HepG2 (cell line): ENCODE measurements at regions of chr9 and their contacts with region 1.

Region 1: DNA sequence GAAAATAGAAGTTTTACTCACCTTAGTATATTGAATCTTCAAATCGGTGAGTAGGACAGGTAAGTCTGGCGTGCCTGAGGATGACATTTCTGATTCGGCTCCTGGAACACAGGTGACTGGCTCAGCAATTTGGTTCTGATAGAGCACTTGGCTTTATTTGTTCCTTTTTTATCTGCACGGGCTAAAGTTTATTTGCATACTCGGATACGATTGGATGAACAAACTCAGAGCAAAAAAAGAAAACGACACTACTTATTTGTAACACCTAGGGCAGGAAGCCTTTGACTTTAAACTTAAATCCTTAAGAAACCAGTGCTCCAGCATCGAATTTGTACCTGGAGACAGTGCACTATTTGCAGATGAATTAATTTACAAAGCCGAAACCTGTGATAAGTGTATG is at the start of gene ALDH1A1:
- DNase-seq: peak; percentile 68
- ATAC-seq: peak; percentile 75
- H3K4me3 ChIP-seq: peak within 1 kb of the TSS; percentile 63 to 86 (median 64)
- H3K27ac ChIP-seq: peak within 1 kb of the TSS; percentile 75
- H3K4me1 ChIP-seq: peaks cover 40% of the 10 kb centered on the region
- H3K27me3 ChIP-seq: no peaks in the 10 kb centered on the region
- CTCF ChIP-seq: no peak
- EP300 ChIP-seq: no peak
- POLR2A ChIP-seq: peak; percentile 74 to 86
- RAD21 ChIP-seq: no peak
- total RNA-seq, gene ALDH1A1: 439 and 686 TPM in 2 replicates

Region 2: DNA sequence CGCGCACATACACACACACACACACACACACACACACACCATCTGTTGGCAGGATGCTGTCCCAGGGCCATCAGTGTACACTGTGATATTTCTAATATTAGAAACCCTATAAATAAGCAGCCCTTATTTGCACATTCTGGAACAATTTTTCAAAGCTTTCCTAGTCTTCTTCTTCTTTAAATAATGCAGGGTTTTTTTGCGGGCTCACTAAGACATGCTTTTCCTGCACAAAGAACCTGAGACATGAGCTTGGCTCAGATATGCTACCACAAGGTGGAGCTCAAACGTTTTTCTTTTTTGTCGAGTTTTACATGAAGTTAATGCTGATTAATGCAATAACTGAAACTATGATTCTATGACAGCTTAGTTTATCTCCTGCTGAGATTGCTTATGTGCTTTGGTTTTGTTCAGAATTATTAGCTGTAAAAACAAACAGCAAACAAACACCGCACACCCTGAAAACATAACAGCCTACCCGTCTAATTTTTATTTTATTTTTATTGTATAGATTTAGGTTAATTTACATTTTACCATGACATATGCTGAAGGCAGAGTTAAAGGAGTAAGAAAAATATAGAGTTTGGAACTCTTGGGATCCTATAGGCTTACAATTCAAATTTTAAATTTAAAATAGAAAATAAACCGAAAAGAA is 95.8 kb before region 1 on chr9:
- CTCF ChIA-PET with region 1: no interaction called
- POLR2A ChIA-PET with region 1: interaction called, 10 read pairs
- in situ Hi-C with region 1: no loop called
- intact Hi-C with region 1: no loop called
- DNase-seq: peak; percentile 65
- ATAC-seq: no peak
- H3K4me3 ChIP-seq: no peak overlapping the region
- H3K27ac ChIP-seq: peak overlapping the region; percentile 99
- H3K4me1 ChIP-seq: peaks cover 30% of the 10 kb centered on the region
- H3K27me3 ChIP-seq: no peaks in the 10 kb centered on the region
- CTCF ChIP-seq: peak; percentile 70
- EP300 ChIP-seq: no peak
- POLR2A ChIP-seq: no peak
- RAD21 ChIP-seq: peak; percentile 43; the same call in 1 of the 2 replicates

Region 3: GRCh38 chr9:72888067-72888466 is 64.8 kb before region 1 on chr9:
- CTCF ChIA-PET with region 1: no interaction called
- POLR2A ChIA-PET with region 1: no interaction called
- in situ Hi-C with region 1: no loop called
- intact Hi-C with region 1: no loop called
- DNase-seq: no peak
- ATAC-seq: no peak
- H3K4me3 ChIP-seq: no peak overlapping the region
- H3K27ac ChIP-seq: no peak overlapping the region
- H3K4me1 ChIP-seq: no peaks in the 10 kb centered on the region
- H3K27me3 ChIP-seq: no peaks in the 10 kb centered on the region
- CTCF ChIP-seq: no peak
- EP300 ChIP-seq: no peak
- POLR2A ChIP-seq: no peak
- RAD21 ChIP-seq: no peak

Region 4: GRCh38 chr9:72925126-72925789 is 27.7 kb before region 1 on chr9:
- CTCF ChIA-PET with region 1: no interaction called
- POLR2A ChIA-PET with region 1: interaction called, 16 read pairs
- in situ Hi-C with region 1: no loop called
- intact Hi-C with region 1: no loop called
- DNase-seq: peak; percentile 79
- ATAC-seq: peak; percentile 83
- H3K4me3 ChIP-seq: no peak overlapping the region
- H3K27ac ChIP-seq: peak overlapping the region; percentile 36
- H3K4me1 ChIP-seq: peaks cover 20% of the 10 kb centered on the region
- H3K27me3 ChIP-seq: no peaks in the 10 kb centered on the region
- CTCF ChIP-seq: no peak
- EP300 ChIP-seq: peak in 1 of 2 experiments; percentile 64; a peak in 2 of 4 replicates
- POLR2A ChIP-seq: no peak
- RAD21 ChIP-seq: no peak

Region 5: DNA sequence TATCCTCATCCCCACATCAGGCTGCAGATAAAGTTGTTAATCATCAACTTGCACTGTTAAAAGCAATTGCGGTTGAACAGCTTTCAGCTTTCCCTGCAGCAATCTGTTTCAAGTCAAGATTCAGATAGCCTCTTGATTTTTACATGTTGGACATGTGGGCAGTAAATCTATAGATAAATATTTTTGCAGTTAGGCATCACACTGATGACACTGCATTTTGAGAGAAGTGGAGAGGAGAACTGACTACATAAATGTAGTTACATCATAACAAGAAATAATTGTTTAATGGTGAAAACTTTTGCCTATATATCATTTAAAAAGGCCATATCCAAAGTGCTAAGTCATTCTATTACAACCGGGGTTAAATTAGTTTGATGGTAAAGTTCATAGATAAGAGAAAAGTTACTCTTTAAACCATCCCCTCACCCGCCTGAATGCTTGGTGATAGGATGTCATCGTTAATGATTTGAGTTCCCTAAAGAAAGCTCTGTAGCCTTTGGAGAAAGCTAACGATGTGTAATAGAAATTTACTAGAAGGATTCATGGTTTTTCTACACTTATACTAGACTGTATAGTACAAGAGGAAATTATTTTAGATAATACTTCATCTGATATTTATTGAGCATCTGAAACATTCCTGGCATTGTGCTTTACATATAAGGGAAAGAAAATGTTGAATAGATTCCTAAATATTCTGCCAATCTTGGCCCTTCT is 30.8 kb after region 1 on chr9:
- CTCF ChIA-PET with region 1: no interaction called
- POLR2A ChIA-PET with region 1: interaction called, 20 read pairs
- in situ Hi-C with region 1: no loop called
- intact Hi-C with region 1: loop called (anchors 1 kb)
- DNase-seq: peak; percentile 87
- ATAC-seq: peak; percentile 90
- H3K4me3 ChIP-seq: peak overlapping the region in 2 of 3 experiments; percentile 40; a peak in 2 of 6 replicates
- H3K27ac ChIP-seq: peak overlapping the region; percentile 99
- H3K4me1 ChIP-seq: peaks cover 78% of the 10 kb centered on the region
- H3K27me3 ChIP-seq: no peaks in the 10 kb centered on the region
- CTCF ChIP-seq: no peak
- EP300 ChIP-seq: peak in 1 of 2 experiments; percentile 71; a peak in 2 of 4 replicates
- POLR2A ChIP-seq: peak in 1 of 2 experiments; percentile 54; a peak in 1 of 4 replicates
- RAD21 ChIP-seq: no peak

Region 6: GRCh38 chr9:72997387-72997995 is 44.6 kb after region 1 on chr9:
- CTCF ChIA-PET with region 1: no interaction called
- POLR2A ChIA-PET with region 1: interaction called, 4 read pairs
- in situ Hi-C with region 1: loop called (anchors 5 kb)
- intact Hi-C with region 1: no loop called
- DNase-seq: peak; percentile 93
- ATAC-seq: peak; percentile 99
- H3K4me3 ChIP-seq: peak overlapping the region; percentile 21 to 63 (median 26)
- H3K27ac ChIP-seq: peak overlapping the region; percentile 84
- H3K4me1 ChIP-seq: peaks cover 45% of the 10 kb centered on the region
- H3K27me3 ChIP-seq: no peaks in the 10 kb centered on the region
- CTCF ChIP-seq: no peak
- EP300 ChIP-seq: peak in 1 of 2 experiments; percentile 97; a peak in 2 of 4 replicates
- POLR2A ChIP-seq: peak; percentile 51 to 55; a peak in 2 of 4 replicates
- RAD21 ChIP-seq: no peak

Region 7: DNA sequence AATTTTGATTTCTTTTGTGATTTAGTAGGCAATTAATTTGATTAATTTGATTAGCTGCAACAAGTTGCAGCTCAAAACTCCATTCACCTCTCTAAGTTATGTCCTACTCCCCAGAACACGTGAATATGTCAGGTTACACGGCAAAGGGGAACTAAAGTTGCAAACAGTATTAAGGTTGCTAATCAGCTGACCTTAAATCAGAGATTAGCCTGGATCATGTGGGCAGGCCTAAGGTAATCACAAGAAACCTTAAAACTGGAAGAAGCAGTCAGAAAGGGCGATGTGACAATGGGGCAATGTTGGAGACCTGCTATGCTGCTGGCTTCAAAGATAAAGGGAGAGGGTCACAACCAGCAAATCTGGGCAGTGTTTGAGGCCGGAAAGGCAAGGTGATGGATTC is 151.4 kb after region 1 on chr9:
- CTCF ChIA-PET with region 1: no interaction called
- POLR2A ChIA-PET with region 1: no interaction called
- in situ Hi-C with region 1: no loop called
- intact Hi-C with region 1: no loop called
- DNase-seq: no peak
- ATAC-seq: no peak
- H3K4me3 ChIP-seq: no peak overlapping the region
- H3K27ac ChIP-seq: no peak overlapping the region
- H3K4me1 ChIP-seq: no peaks in the 10 kb centered on the region
- H3K27me3 ChIP-seq: no peaks in the 10 kb centered on the region; a peak in 1 of 5 replicates
- CTCF ChIP-seq: no peak
- EP300 ChIP-seq: no peak
- POLR2A ChIP-seq: no peak
- RAD21 ChIP-seq: no peak